ENCODE measurements at regions of chr3 and their contacts with region 1.

Region 1: GRCh38 chr3:194682694-194683310 is 2.9 kb upstream of the FAM43A start:
- DNase-seq: peak; percentile 54 to 75 (median 68)
- H3K4me3 ChIP-seq: no peak overlapping the region
- H3K27ac ChIP-seq: no peak overlapping the region
- H3K4me1 ChIP-seq: peaks cover 5% of the 10 kb centered on the region
- H3K27me3 ChIP-seq: no peaks in the 10 kb centered on the region
- CTCF ChIP-seq: peak; percentile 76 to 87 (median 81)
- EP300 ChIP-seq: no peak
- POLR2A ChIP-seq: no peak

Region 2: GRCh38 chr3:195106418-195106906 is 423.7 kb after region 1 on chr3:
- intact Hi-C with region 1: loop called (anchors 5 to 10 kb)
- DNase-seq: peak; percentile 53 to 80 (median 69)
- H3K4me3 ChIP-seq: no peak overlapping the region
- H3K27ac ChIP-seq: no peak overlapping the region
- H3K4me1 ChIP-seq: peaks cover 4% of the 10 kb centered on the region
- H3K27me3 ChIP-seq: no peaks in the 10 kb centered on the region
- CTCF ChIP-seq: peak; percentile 90 to 98 (median 96)
- EP300 ChIP-seq: no peak
- POLR2A ChIP-seq: no peak

Region 3: GRCh38 chr3:195512798-195513345 is 830.1 kb after region 1 on chr3:
- intact Hi-C with region 1: loop called in 1 of 4 experiments (anchors 10 kb)
- DNase-seq: no peak
- H3K4me3 ChIP-seq: no peak overlapping the region
- H3K27ac ChIP-seq: no peak overlapping the region
- H3K4me1 ChIP-seq: no peaks in the 10 kb centered on the region
- H3K27me3 ChIP-seq: no peaks in the 10 kb centered on the region
- CTCF ChIP-seq: no peak
- EP300 ChIP-seq: no peak
- POLR2A ChIP-seq: no peak